A673 (cell line): ENCODE measurements at regions of chr9 and their contacts with region 1.

Region 1: DNA sequence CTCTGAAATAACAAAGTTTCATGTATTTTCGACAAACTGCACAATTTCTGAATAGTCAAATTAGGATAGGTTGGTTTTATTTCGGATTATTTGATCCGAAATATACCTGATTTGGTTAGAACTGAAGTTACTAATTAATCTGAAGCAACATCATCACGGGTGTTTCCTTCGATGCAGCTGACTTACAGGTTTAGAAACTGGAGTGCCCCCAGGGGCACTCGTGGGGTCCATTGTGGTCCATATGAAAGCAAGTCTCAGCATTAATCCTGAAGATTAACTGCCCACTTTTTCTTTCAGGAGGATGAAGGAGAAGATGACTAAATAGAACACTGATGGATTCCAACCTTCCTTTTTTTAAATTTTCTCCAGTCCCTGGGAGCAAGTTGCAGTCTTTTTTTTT is 5.3 kb downstream of the SET start:
- DNase-seq: no peak
- H3K4me3 ChIP-seq: no peak overlapping the region
- H3K27ac ChIP-seq: no peak overlapping the region
- H3K4me1 ChIP-seq: peaks cover 8% of the 10 kb centered on the region
- H3K27me3 ChIP-seq: no peaks in the 10 kb centered on the region
- CTCF ChIP-seq: no peak

Region 2: DNA sequence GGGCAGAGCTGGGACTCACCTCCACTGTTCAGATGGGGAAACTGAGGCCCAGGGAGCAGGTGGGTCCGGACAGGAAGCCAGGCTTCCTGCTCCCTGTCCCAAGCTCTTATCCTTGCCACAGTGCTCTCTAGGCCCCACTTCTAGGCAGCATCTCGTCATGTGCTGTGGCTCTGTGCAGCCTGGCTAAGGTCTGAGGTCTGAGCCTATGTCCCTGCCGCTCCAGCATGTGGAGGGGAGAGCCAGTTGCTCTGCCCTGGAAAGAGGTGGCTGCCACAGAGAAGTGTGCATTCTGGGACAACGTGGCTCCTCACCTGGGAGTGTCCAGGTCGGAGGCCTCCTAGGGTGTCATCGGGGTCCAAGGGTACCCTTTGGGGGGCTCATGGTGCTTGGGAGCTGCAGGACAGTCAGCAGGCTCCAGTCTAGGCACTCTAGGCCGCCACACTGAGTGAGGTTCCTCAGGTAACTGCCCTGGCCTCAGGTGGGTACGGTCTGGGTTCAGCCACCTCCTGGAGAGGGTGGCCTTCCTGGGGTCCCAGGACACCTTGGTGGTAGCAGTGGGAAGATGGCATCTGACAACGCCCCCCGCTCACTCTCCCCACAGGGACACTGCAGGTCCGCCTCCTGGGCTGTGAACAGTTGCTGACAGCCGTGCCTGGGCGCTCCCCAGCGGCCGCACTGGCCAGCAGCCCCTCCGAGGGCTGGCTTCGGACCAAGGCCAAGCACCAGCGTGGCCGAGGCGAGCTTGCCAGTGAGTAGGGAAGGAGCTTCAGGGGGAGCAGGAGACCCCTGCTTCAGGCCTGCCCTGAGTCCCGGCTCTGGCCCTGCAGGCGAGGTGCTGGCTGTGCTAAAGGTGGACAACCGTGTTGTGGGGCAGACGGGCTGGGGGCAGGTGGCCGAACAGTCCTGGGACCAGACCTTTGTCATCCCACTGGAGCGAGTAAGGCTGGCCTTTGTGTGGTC is 18.4 kb after region 1 on chr9:
- CTCF ChIA-PET with region 1: no interaction called
- POLR2A ChIA-PET with region 1: interaction called, 18 read pairs
- intact Hi-C with region 1: no loop called
- DNase-seq: no peak
- H3K4me3 ChIP-seq: no peak overlapping the region
- H3K27ac ChIP-seq: no peak overlapping the region
- H3K4me1 ChIP-seq: no peaks in the 10 kb centered on the region
- H3K27me3 ChIP-seq: no peaks in the 10 kb centered on the region
- CTCF ChIP-seq: no peak

Region 3: DNA sequence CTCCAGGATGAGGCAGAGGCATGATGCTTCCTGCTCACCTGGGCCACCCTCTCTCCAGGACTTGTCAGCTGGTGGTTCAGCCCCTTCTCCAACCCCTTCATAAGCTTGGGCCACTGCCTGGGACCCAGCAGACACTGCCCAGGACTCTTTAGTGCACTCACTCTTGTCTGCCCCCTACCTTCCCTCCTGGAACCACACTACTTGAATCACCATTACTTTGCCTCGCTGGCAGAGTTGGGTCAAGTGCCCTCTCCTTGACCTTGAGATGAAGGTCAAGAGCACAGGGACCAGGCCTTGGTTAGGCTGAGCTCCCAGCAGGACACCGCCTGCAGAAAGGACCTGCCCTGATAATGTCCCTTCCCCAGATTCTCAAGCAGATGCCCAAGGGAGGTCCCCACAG is 115.5 kb after region 1 on chr9:
- CTCF ChIA-PET with region 1: no interaction called
- POLR2A ChIA-PET with region 1: no interaction called
- intact Hi-C with region 1: no loop called
- DNase-seq: no peak
- H3K4me3 ChIP-seq: no peak overlapping the region
- H3K27ac ChIP-seq: no peak overlapping the region
- H3K4me1 ChIP-seq: no peaks in the 10 kb centered on the region
- H3K27me3 ChIP-seq: no peaks in the 10 kb centered on the region
- CTCF ChIP-seq: 0 out of 2 replicates have a peak, but pooled peaks have one; percentile 14